A549 (cell line): ENCODE measurements at regions of chr6 and their contacts with region 1.

Region 1: GRCh38 chr6:169701954-169702839 is at the starts of genes C6orf120 and WDR27:
- DNase-seq: peak; percentile 90 to 94
- ATAC-seq: peak; percentile 96 to 97
- H3K4me3 ChIP-seq: peak within 1 kb of the TSS; percentile 67
- H3K27ac ChIP-seq: peak within 1 kb of the TSS; percentile 90 to 100
- H3K4me1 ChIP-seq: peaks cover 31% of the 10 kb centered on the region
- CTCF ChIP-seq: no peak
- EP300 ChIP-seq: no peak
- POLR2A ChIP-seq: peak; percentile 78
- RAD21 ChIP-seq: 0 out of 5 replicates have a peak, but pooled peaks of 1 of the 2 experiments have one; percentile 10
- polyA plus RNA-seq, gene C6orf120: 14.8 and 17.3 TPM in 2 replicates
- polyA plus RNA-seq, gene WDR27: 31.4 and 36.1 TPM in 2 replicates

Region 2: GRCh38 chr6:169723200-169723909 is 21.2 kb after region 1 on chr6:
- CTCF ChIA-PET with region 1: interaction called, 3 read pairs
- POLR2A ChIA-PET with region 1: interaction called, 13 read pairs
- DNase-seq: peak; percentile 25 to 66
- ATAC-seq: peak; percentile 48 to 65
- H3K4me3 ChIP-seq: peak overlapping the region; percentile 77
- H3K27ac ChIP-seq: peak overlapping the region; percentile 88 to 99
- H3K4me1 ChIP-seq: peaks cover 29% of the 10 kb centered on the region
- CTCF ChIP-seq: no peak
- EP300 ChIP-seq: no peak
- POLR2A ChIP-seq: no peak; the same call in 1 of the 2 replicates
- RAD21 ChIP-seq: no peak